CD4-positive, alpha-beta memory T cell (primary cell): ENCODE measurements at regions of chr17 and their contacts with region 1.

Region 1: GRCh38 chr17:29867643-29868181 is 62.3 kb downstream of the SSH2 start:
- DNase-seq: no peak
- H3K4me3 ChIP-seq: no peak overlapping the region
- H3K4me3 Mint-ChIP-seq: no peak overlapping the region
- H3K27ac ChIP-seq: no peak overlapping the region
- H3K27ac Mint-ChIP-seq: peak overlapping the region in 2 of 7 donors; percentile 13 to 14
- H3K4me1 ChIP-seq: peaks cover 6% of the 10 kb centered on the region
- H3K4me1 Mint-ChIP-seq: peaks cover 17 to 22% (median 18%) of the 10 kb centered on the region in 4 donors
- H3K27me3 ChIP-seq: no peaks in the 10 kb centered on the region
- H3K27me3 Mint-ChIP-seq: no peaks in the 10 kb centered on the region

Region 2: GRCh38 chr17:29844339-29845048 is 23.2 kb before region 1 on chr17:
- CTCF ChIA-PET with region 1: no interaction called
- POLR2A ChIA-PET with region 1: no interaction called
- intact Hi-C with region 1: no loop called
- DNase-seq: no peak
- H3K4me3 ChIP-seq: no peak overlapping the region
- H3K4me3 Mint-ChIP-seq: no peak overlapping the region
- H3K27ac ChIP-seq: no peak overlapping the region
- H3K27ac Mint-ChIP-seq: peak overlapping the region in 2 of 7 donors; percentile 24 to 47
- H3K4me1 ChIP-seq: no peaks in the 10 kb centered on the region
- H3K4me1 Mint-ChIP-seq: peaks cover 0 to 3% (median 1%) of the 10 kb centered on the region in 4 donors
- H3K27me3 ChIP-seq: no peaks in the 10 kb centered on the region
- H3K27me3 Mint-ChIP-seq: no peaks in the 10 kb centered on the region

Region 3: DNA sequence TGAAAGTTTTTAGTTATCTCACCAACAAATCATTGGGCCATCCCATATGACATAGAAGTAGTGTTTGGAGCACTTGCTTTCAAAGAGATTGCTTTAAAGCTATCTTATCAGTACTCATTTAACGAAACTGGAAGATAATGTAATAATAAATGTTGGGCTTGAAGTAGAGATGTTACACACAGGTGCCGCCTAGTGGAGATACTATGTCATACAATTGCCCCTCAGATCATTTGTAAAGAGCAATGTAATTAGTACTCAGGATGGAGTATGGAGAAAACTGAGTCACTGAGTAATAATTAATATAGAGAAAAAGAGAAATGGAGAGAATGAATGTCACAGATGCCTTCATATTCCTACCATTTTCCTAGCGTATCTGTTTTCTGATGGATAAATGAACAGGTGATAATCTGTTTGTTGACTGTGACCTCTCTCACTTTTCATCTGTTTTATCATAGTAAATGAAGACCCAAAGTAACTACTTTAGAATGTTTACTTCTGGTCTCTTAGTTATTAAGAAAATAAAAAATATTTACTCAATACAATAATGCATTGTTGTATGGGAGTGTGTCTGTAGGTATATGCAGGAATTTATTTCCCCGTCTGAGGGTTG is 154.1 kb after region 1 on chr17:
- CTCF ChIA-PET with region 1: no interaction called
- POLR2A ChIA-PET with region 1: no interaction called
- intact Hi-C with region 1: loop called (anchors 5 kb)
- DNase-seq: peak; percentile 25 to 53 (median 48)
- H3K4me3 ChIP-seq: no peak overlapping the region
- H3K4me3 Mint-ChIP-seq: no peak overlapping the region
- H3K27ac ChIP-seq: no peak overlapping the region
- H3K27ac Mint-ChIP-seq: no peak overlapping the region
- H3K4me1 ChIP-seq: no peaks in the 10 kb centered on the region
- H3K4me1 Mint-ChIP-seq: peaks cover 0 to 2% (median under 1%) of the 10 kb centered on the region in 4 donors
- H3K27me3 ChIP-seq: peaks cover 2% of the 10 kb centered on the region
- H3K27me3 Mint-ChIP-seq: peaks cover 0 to 2% of the 10 kb centered on the region in 2 donors